Endothelial cell of umbilical vein (primary cell): ENCODE measurements at regions of chr20 and their contacts with region 1.

Region 1: DNA sequence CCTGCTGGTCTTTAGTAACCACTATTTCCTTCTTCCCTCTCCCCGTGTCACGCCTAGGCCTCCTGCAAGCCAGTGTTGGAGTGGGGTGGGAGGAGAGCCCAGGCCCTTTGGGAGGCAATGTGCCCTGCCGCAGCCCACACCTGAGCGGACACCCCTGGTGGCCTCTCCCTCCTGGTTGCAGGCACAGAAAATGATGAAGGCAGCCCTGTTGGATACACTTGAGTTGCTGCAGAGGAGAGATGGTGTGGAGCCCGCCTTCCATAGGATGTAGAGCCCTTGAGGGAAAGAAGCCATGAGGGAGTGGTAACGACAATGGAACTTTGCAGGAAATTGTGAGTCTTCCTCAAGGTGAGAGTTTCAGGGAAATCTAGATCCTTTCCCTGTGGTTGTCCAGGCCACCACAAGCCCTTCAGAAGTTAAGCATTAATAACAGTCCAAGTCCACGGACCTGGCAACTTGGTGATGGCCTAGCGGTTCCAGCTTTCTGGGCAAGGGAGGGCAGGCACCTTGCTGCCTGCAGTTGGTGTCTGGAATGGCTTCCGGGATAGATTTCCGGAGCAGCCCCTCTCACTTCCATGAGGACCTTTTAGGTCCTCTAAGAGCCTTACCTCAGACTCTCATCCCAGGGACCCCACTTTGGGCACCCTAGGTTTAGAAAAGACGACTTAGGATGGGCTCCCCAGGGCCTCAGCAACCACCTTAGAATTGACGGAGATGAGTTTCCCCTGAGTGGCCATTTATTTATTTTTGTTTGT is 67.3 kb upstream of the NXT1 start:
- DNase-seq: no peak
- H3K4me3 ChIP-seq: no peak overlapping the region
- H3K27ac ChIP-seq: no peak overlapping the region
- H3K4me1 ChIP-seq: peaks cover 9% of the 10 kb centered on the region
- H3K27me3 ChIP-seq: no peaks in the 10 kb centered on the region
- CTCF ChIP-seq: no peak
- POLR2A ChIP-seq: no peak

Region 2: GRCh38 chr20:23270382-23270911 is 12.8 kb before region 1 on chr20:
- CTCF ChIA-PET with region 1: interaction called, 3 read pairs
- POLR2A ChIA-PET with region 1: no interaction called
- dilution Hi-C with region 1: no loop called
- intact Hi-C with region 1: loop called (anchors 1 kb)
- DNase-seq: peak; percentile 83
- H3K4me3 ChIP-seq: no peak overlapping the region
- H3K27ac ChIP-seq: peak overlapping the region; percentile 76
- H3K4me1 ChIP-seq: peaks cover 17% of the 10 kb centered on the region
- H3K27me3 ChIP-seq: no peaks in the 10 kb centered on the region
- CTCF ChIP-seq: no peak
- POLR2A ChIP-seq: no peak

Region 3: GRCh38 chr20:23320317-23320716 is 37.0 kb after region 1 on chr20:
- CTCF ChIA-PET with region 1: interaction called, 4 read pairs
- POLR2A ChIA-PET with region 1: no interaction called
- dilution Hi-C with region 1: no loop called
- intact Hi-C with region 1: loop called (anchors 5 kb)
- DNase-seq: peak; percentile 21
- H3K4me3 ChIP-seq: no peak overlapping the region
- H3K27ac ChIP-seq: no peak overlapping the region
- H3K4me1 ChIP-seq: peaks cover 10% of the 10 kb centered on the region
- H3K27me3 ChIP-seq: peaks cover 0 to 5% of the 10 kb centered on the region in 2 experiments
- CTCF ChIP-seq: peak; percentile 37 to 50
- POLR2A ChIP-seq: no peak

Region 4: GRCh38 chr20:23668477-23668951 is 385.2 kb after region 1 on chr20:
- CTCF ChIA-PET with region 1: no interaction called
- POLR2A ChIA-PET with region 1: no interaction called
- dilution Hi-C with region 1: no loop called
- intact Hi-C with region 1: no loop called
- DNase-seq: peak; percentile 67
- H3K4me3 ChIP-seq: no peak overlapping the region
- H3K27ac ChIP-seq: no peak overlapping the region
- H3K4me1 ChIP-seq: peaks cover 7% of the 10 kb centered on the region
- H3K27me3 ChIP-seq: no peaks in the 10 kb centered on the region
- CTCF ChIP-seq: peak; percentile 81 to 82
- POLR2A ChIP-seq: no peak